ENCODE measurements at regions of chr19 and their contacts with region 1.

Region 1: GRCh38 chr19:1789261-1790041 is 22.6 kb downstream of the ATP8B3 start:
- DNase-seq: no peak
- H3K4me3 Mint-ChIP-seq: no peak overlapping the region
- H3K27ac Mint-ChIP-seq: no peak overlapping the region
- H3K4me1 Mint-ChIP-seq: no peaks in the 10 kb centered on the region
- H3K27me3 Mint-ChIP-seq: peaks cover 14% of the 10 kb centered on the region

Region 2: GRCh38 chr19:1540365-1540925 is 249.0 kb before region 1 on chr19:
- CTCF ChIA-PET with region 1: interaction called, 7 read pairs
- intact Hi-C with region 1: loop called (anchors 10 kb)
- DNase-seq: no peak
- H3K4me3 Mint-ChIP-seq: no peak overlapping the region
- H3K27ac Mint-ChIP-seq: no peak overlapping the region
- H3K4me1 Mint-ChIP-seq: no peaks in the 10 kb centered on the region
- H3K27me3 Mint-ChIP-seq: peaks cover 23% of the 10 kb centered on the region

Region 3: GRCh38 chr19:1739960-1740629 is 49.4 kb before region 1 on chr19:
- CTCF ChIA-PET with region 1: no interaction called
- intact Hi-C with region 1: no loop called
- DNase-seq: no peak
- H3K4me3 Mint-ChIP-seq: no peak overlapping the region
- H3K27ac Mint-ChIP-seq: no peak overlapping the region
- H3K4me1 Mint-ChIP-seq: no peaks in the 10 kb centered on the region
- H3K27me3 Mint-ChIP-seq: peaks cover 16% of the 10 kb centered on the region

Measured in activated naive CD4-positive, alpha-beta T cell treated with anti-CD3 and anti-CD28 coated beads for 36 hours (primary cell).